Ovary (tissue), 10 donors: ENCODE measurements at regions of chr7 and their contacts with region 1.

Region 1: GRCh38 chr7:28408960-28409715 is 3.2 kb upstream of the CREB5 start:
- DNase-seq: peak; percentile 89 to 97 (median 93)
- H3K4me3 ChIP-seq: peak overlapping the region; percentile 33
- H3K27ac ChIP-seq: peak overlapping the region; percentile 24 to 46
- H3K4me1 ChIP-seq: peaks cover 7% of the 10 kb centered on the region
- H3K27me3 ChIP-seq: no peaks in the 10 kb centered on the region
- CTCF ChIP-seq: peak in 1 of 3 donors; percentile 12
- EP300 ChIP-seq: peak; percentile 18
- POLR2A ChIP-seq: peak; percentile 68

Region 2: DNA sequence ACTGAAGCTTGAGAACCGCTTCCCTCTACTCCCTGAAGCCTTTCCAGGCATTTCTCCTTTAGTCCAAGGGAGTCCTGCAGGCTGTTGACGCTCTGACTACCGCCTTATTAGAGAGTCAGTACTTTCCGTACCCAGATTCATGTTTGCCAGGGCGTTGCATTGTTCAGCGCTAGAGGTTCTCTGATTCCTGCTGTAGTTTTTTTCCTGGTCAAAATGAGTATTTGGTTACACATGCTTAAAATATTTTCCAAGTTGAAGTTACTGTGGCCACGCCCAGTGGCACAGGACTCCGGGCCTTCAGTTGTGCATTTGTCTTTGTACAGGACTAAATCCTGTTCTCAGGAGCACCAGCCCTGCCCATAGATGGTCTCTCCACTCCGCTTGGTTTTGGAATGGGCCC is 1733.6 kb after region 1 on chr7:
- intact Hi-C with region 1: loop called in 1 of 4 experiments (anchors 5 kb)
- DNase-seq: peak in 1 of 5 donors; percentile 42
- H3K4me3 ChIP-seq: no peak overlapping the region
- H3K27ac ChIP-seq: no peak overlapping the region
- H3K4me1 ChIP-seq: peaks cover 2% of the 10 kb centered on the region
- H3K27me3 ChIP-seq: no peaks in the 10 kb centered on the region
- CTCF ChIP-seq: no peak
- EP300 ChIP-seq: no peak
- POLR2A ChIP-seq: no peak